ENCODE measurements at regions of chr3 and their contacts with region 1.

Region 1: GRCh38 chr3:192177383-192177782 is 550.0 kb downstream of the FGF12 start:
- DNase-seq: no peak
- ATAC-seq: no peak
- H3K4me3 ChIP-seq: no peak overlapping the region
- H3K27ac ChIP-seq: no peak overlapping the region
- H3K4me1 ChIP-seq: no peaks in the 10 kb centered on the region
- H3K27me3 ChIP-seq: no peaks in the 10 kb centered on the region

Region 2: DNA sequence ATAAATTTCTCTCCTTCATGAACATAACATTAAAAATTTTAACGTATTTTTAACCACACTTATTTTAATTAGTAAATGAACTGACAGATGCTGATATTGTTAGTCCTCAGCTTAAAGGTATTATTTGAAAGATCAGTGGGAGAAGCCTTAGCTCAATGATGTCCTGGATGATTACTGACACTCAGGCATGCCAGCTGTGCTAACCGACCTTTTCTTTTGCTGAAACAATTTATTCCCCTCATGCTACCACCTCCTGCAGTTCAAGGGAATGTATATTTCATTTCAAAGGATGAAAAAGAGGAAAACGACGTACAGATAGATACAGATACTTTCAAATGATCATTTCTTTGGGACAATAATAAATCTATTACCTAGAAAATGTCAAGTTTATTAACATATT is 70.8 kb before region 1 on chr3:
- intact Hi-C with region 1: no loop called
- DNase-seq: no peak
- ATAC-seq: no peak
- H3K4me3 ChIP-seq: no peak overlapping the region
- H3K27ac ChIP-seq: no peak overlapping the region
- H3K4me1 ChIP-seq: no peaks in the 10 kb centered on the region
- H3K27me3 ChIP-seq: no peaks in the 10 kb centered on the region

Region 3: GRCh38 chr3:192409825-192410683 is 232.7 kb after region 1 on chr3:
- intact Hi-C with region 1: loop called in 1 of 2 experiments (anchors 5 kb)
- DNase-seq: peak in 1 of 2 donors; percentile 77
- ATAC-seq: no peak
- H3K4me3 ChIP-seq: peak overlapping the region in 1 of 2 donors; percentile 15
- H3K27ac ChIP-seq: no peak overlapping the region
- H3K4me1 ChIP-seq: no peaks in the 10 kb centered on the region
- H3K27me3 ChIP-seq: peaks cover 0 to 2% of the 10 kb centered on the region in 2 donors